ENCODE measurements at regions of chr18 and their contacts with region 1.

Region 1: DNA sequence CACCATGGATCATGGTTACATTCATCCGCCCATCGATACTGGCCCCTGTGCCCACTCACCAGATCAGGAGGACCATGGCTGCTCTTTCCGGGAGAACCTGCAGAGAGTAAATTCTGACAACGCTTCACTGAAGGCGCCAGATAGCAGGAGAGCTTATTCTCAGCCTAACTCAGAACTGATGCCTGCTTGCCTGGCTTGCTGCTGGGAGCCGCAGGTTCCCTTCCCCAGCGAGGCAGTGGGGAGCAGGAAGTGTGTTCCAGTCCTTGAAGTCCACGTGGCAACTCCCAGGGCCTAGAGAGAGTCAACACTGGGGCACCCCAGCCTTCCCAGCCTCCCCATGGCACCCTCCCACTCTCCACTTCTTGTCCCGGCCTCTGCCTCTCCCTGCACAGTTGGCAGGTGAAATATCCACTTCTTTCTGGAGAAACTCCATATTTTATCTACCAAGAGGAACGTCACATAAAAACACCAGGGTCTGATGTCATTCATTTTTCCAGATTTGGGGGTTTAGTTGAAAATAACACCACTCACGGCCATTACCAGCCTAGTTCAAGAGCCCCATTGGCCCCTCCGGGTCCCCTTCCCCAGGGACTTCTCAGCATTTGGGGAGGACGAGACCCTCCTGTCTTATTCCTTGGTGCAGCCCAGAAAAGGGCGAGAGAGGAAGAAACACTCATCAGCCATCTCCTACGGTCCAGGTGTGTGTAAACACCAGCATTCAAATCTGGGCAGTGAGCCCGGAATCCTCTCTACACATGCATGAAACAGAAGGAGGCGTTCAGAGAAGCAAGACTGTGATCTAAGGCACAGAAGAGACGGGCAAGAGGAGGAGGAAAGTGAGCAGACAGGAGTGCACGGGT is 3.5 kb upstream of the TUBB6 start:
- DNase-seq: peak in 4 of 6 donors; percentile 58 to 71 (median 63)
- ATAC-seq: peak in 3 of 4 donors; percentile 54 to 58 (median 55)
- H3K4me3 ChIP-seq: no peak overlapping the region
- H3K27ac ChIP-seq: no peak overlapping the region
- H3K4me1 ChIP-seq: no peaks in the 10 kb centered on the region
- H3K27me3 ChIP-seq: no peaks in the 10 kb centered on the region
- CTCF ChIP-seq: no peak

Region 2: GRCh38 chr18:12254136-12254829 is 50.3 kb before region 1 on chr18 and contains the start of gene CIDEA:
- intact Hi-C with region 1: loop called in 1 of 3 experiments (anchors 5 kb)
- DNase-seq: no peak
- ATAC-seq: peak; percentile 48 to 69 (median 56)
- H3K4me3 ChIP-seq: peak within 1 kb of the TSS in 3 of 4 donors; percentile 7 to 43 (median 25)
- H3K27ac ChIP-seq: no peak within 1 kb of the TSS
- H3K4me1 ChIP-seq: peaks cover 0 to 7% (median 0%) of the 10 kb centered on the region in 3 donors
- H3K27me3 ChIP-seq: peaks cover 0 to 4% (median 0%) of the 10 kb centered on the region in 4 donors
- CTCF ChIP-seq: no peak
- total RNA-seq, gene CIDEA: 0.35 to 0.64 TPM in 2 of 6 donors, not detected in the others